Heart left ventricle (tissue), 16 donors: ENCODE measurements at regions of chrX and their contacts with region 1.

Region 1: GRCh38 chrX:18410043-18410442 is 15.4 kb upstream of the CDKL5 start:
- DNase-seq: no peak
- ATAC-seq: peak in 2 of 4 donors; percentile 53 to 61
- H3K4me3 ChIP-seq: no peak overlapping the region
- H3K27ac ChIP-seq: no peak overlapping the region
- H3K4me1 ChIP-seq: no peaks in the 10 kb centered on the region
- H3K27me3 ChIP-seq: no peaks in the 10 kb centered on the region
- CTCF ChIP-seq: peak in 10 of 12 donors; percentile 8 to 46 (median 30)
- POLR2A ChIP-seq: no peak

Region 2: GRCh38 chrX:18448416-18448815 is 38.4 kb after region 1 on chrX:
- intact Hi-C with region 1: no loop called
- DNase-seq: no peak
- ATAC-seq: no peak
- H3K4me3 ChIP-seq: no peak overlapping the region
- H3K27ac ChIP-seq: no peak overlapping the region
- H3K4me1 ChIP-seq: peaks cover 0 to 3% (median 0%) of the 10 kb centered on the region in 12 donors
- H3K27me3 ChIP-seq: no peaks in the 10 kb centered on the region
- CTCF ChIP-seq: no peak
- POLR2A ChIP-seq: no peak

Region 3: DNA sequence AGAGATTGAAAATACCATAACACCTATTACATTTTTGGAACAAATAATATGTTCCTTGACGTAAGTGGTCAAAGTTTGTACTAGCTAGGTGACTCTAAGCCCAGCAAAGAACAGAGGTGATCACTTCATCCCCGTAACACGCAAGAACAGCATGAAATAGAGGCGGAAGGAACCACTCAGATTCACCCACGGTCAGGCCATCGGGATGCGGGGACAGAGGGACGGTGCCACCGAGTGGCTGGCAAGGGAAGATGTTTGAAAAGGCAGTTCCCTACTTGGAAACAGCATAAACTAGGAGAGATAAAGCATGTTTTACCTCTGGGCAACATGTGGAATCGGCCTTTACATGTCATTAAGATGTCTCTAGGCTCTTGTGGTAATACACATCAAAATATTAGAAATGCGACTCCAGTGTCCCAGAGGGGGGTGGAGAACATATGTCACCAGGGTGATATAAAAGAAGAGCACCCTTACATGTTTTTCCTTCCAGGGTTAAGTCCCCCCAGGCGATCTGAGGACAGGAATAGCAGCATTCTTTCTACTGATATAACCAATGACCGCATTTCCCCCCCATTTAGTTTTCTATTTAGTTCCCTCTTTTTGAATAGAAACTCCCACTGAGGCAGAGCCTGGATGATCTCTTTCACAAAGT is 489.9 kb after region 1 on chrX:
- intact Hi-C with region 1: loop called in 7 of 10 experiments (anchors 2 to 5 kb)
- DNase-seq: no peak
- ATAC-seq: no peak
- H3K4me3 ChIP-seq: no peak overlapping the region
- H3K27ac ChIP-seq: no peak overlapping the region
- H3K4me1 ChIP-seq: peaks cover 0 to 12% (median under 1%) of the 10 kb centered on the region in 12 donors
- H3K27me3 ChIP-seq: no peaks in the 10 kb centered on the region
- CTCF ChIP-seq: peak in 10 of 12 donors; percentile 14 to 55 (median 38)
- POLR2A ChIP-seq: no peak

Region 4: DNA sequence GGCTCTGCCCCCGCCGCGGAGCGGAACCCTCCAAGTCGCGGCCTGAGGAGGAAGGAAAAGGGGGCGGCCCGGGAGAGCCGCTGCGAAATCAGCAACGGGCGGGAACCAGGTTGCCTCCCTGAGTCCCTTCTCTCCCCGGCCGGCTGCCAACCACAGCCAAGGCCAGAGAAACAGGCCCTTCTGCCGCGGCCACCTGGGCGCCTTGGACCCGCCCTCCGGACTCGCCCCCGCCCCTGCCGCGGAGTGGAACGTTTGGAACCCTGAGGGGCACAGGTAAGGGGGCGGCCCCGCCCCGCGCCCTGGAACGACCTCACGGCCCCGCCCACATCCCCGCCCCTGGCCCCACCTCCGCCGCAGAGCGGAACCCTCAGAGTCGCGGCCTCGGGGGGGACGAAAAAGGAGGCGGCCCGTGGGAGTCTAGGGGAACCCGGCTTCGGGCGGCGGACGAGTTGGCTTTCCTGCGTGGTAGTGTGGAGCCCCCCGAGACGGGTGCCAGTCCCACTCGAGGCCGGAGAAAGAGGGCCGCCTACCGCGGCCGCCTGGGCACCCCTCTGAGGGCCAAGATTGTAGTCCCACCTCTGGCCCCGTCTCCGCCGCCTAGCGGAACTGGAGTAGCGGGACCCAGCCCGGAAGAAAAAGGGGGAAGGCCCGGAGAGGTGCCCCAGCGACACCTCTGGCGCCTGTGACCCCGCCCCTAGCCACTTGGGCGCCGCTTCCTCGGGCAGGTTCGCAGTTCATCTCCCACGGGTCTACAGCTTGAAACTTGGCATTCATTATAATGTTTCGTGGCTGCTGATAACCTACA is 574.5 kb after region 1 on chrX:
- intact Hi-C with region 1: loop called in 1 of 10 experiments (anchors 10 kb)
- DNase-seq: peak; percentile 78 to 89 (median 84)
- ATAC-seq: peak; percentile 90 to 96 (median 95)
- H3K4me3 ChIP-seq: peak overlapping the region; percentile 42 to 91 (median 77)
- H3K27ac ChIP-seq: peak overlapping the region; percentile 84 to 97 (median 92)
- H3K4me1 ChIP-seq: peaks cover 0 to 16% (median 2%) of the 10 kb centered on the region in 12 donors
- H3K27me3 ChIP-seq: peaks cover 0 to 15% (median 0%) of the 10 kb centered on the region in 9 donors
- CTCF ChIP-seq: peak; percentile 18 to 65 (median 39)
- POLR2A ChIP-seq: peak in 1 of 2 donors; percentile 32